Activated B cell treated with CpG ODN at 0.5 μM for 24 hours (primary cell): ENCODE measurements at regions of chr2 and their contacts with region 1.

Region 1: DNA sequence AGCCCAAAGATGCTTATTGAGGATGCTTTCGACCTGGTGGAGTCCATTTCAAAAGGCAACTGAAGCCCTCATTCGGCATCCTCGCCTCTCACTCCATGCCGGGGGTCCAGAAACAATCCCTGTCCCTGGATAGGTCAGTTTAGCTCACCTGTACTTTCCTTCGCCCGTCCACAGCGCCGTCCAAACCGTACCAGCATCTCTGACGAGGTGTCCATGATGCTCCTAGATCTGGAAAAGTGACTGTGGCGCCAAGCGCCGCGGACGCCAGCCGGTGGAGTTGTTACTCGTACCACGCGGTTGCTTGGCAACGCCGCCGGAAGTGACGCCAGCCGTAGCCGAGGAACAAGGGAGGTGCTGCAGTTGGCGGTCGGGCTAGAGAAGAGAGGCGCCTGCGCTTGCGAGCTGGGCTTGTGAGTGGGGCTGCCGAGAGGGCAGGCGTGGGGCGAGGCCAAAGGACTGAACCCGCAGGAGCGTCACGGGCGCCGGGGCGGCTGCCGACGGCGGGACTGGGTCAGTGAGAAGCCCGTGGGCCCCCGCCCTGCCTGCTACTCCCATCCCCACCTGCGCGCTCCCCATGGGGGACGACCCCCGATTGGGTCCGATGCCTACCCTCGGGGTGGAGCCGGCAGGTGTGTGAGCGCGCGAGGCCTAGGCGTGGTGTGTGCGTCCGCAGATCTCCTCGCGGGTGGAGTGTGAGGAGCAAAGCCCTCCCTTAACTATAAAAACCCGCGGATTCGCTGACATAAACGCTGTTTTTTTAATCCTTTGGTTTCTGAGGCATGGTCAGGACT is at the starts of genes CFAP210 and PHOSPHO2:
- DNase-seq: peak; percentile 98
- ATAC-seq: peak; percentile 97
- H3K4me3 Mint-ChIP-seq: peak within 1 kb of the TSS; percentile 91
- H3K27ac Mint-ChIP-seq: peak within 1 kb of the TSS; percentile 94
- H3K4me1 Mint-ChIP-seq: peaks cover 16% of the 10 kb centered on the region
- H3K27me3 Mint-ChIP-seq: peaks cover 2% of the 10 kb centered on the region
- CTCF ChIP-seq: no peak
- total RNA-seq, gene CFAP210: not detected in 2 replicates
- total RNA-seq, gene PHOSPHO2: 3.2 and 6.3 TPM in 2 replicates

Region 2: GRCh38 chr2:169479257-169480078 is 214.8 kb before region 1 on chr2 and contains the start of gene BBS5:
- CTCF ChIA-PET with region 1: no interaction called
- POLR2A ChIA-PET with region 1: no interaction called
- intact Hi-C with region 1: loop called (anchors 2 kb)
- DNase-seq: peak; percentile 55
- ATAC-seq: peak; percentile 95
- H3K4me3 Mint-ChIP-seq: peak within 1 kb of the TSS; percentile 91
- H3K27ac Mint-ChIP-seq: peak within 1 kb of the TSS; percentile 24
- H3K4me1 Mint-ChIP-seq: peaks cover 10% of the 10 kb centered on the region
- H3K27me3 Mint-ChIP-seq: no peaks in the 10 kb centered on the region
- CTCF ChIP-seq: no peak
- total RNA-seq, gene BBS5: 2.3 and 2.8 TPM in 2 replicates

Region 3: DNA sequence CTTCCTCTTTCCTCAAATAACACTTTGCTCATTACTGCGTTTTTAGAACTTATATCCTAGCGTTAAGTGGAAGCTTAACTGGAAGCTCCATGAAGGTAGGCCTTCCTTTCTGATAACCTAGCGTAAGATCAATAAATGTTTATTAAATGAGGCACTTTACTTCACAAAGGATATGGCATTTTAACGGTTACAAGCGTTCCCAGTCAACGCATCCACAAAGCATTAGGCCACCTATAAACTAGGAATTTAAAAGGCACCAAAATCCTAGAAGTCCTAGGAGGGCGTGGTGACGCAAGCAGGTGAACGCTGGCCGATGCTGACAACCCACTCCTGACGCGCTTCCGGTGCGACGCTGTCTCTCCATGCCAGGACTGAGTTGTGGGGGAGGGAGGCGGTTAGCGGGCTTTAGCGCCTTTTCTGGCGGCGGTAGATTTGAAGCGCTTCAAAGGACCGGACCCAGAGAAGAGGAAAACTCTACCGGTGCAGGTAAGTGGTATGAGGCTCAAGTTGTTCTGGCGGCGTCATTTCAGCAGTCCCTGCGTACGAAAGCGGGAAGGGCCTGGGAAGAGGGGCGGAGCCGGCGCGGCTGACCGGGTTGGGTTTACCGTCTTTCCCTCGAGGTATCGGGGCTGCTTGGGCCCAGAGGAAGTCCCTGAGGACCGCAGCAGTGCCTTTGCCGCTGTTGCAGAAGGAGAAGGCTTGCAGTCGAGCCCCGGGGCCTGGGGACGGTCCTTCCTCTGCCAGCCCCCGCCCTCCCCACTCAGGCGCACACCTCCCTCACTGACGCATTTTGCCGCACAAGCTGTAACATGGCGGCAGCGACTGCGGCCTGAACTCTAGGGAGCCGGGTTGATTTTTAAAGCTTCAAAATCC is 110.1 kb before region 1 on chr2 and contains the start of gene PPIG:
- CTCF ChIA-PET with region 1: no interaction called
- POLR2A ChIA-PET with region 1: interaction called, 3 read pairs
- intact Hi-C with region 1: loop called (anchors 1 kb)
- DNase-seq: peak; percentile 75
- ATAC-seq: peak; percentile 89
- H3K4me3 Mint-ChIP-seq: peak within 1 kb of the TSS; percentile 99
- H3K27ac Mint-ChIP-seq: peak within 1 kb of the TSS; percentile 99
- H3K4me1 Mint-ChIP-seq: peaks cover 39% of the 10 kb centered on the region
- H3K27me3 Mint-ChIP-seq: no peaks in the 10 kb centered on the region
- CTCF ChIP-seq: no peak
- total RNA-seq, gene PPIG: 68.0 and 69.8 TPM in 2 replicates

Region 4: GRCh38 chr2:169732583-169733358 is 38.5 kb after region 1 on chr2:
- CTCF ChIA-PET with region 1: no interaction called
- POLR2A ChIA-PET with region 1: no interaction called
- intact Hi-C with region 1: loop called (anchors 1 kb)
- DNase-seq: no peak
- ATAC-seq: no peak
- H3K4me3 Mint-ChIP-seq: peak overlapping the region; percentile 90
- H3K27ac Mint-ChIP-seq: no peak overlapping the region
- H3K4me1 Mint-ChIP-seq: peaks cover 15% of the 10 kb centered on the region
- H3K27me3 Mint-ChIP-seq: peaks cover 12% of the 10 kb centered on the region
- CTCF ChIP-seq: no peak

Region 5: GRCh38 chr2:169798718-169799592 is 104.6 kb after region 1 on chr2 and contains the start of gene SSB:
- CTCF ChIA-PET with region 1: no interaction called
- POLR2A ChIA-PET with region 1: no interaction called
- intact Hi-C with region 1: loop called (anchors 1 kb)
- DNase-seq: peak; percentile 89
- ATAC-seq: peak; percentile 96
- H3K4me3 Mint-ChIP-seq: peak within 1 kb of the TSS; percentile 91
- H3K27ac Mint-ChIP-seq: peak within 1 kb of the TSS; percentile 94
- H3K4me1 Mint-ChIP-seq: peaks cover 22% of the 10 kb centered on the region
- H3K27me3 Mint-ChIP-seq: no peaks in the 10 kb centered on the region
- CTCF ChIP-seq: no peak
- total RNA-seq, gene SSB: 94.7 and 100 TPM in 2 replicates